Spleen (tissue), 13 donors: ENCODE measurements at regions of chr13 and their contacts with region 1.

Region 1: GRCh38 chr13:42478531-42479156 is 95.3 kb upstream of the TNFSF11 start:
- DNase-seq: no peak
- H3K4me3 ChIP-seq: no peak overlapping the region
- H3K27ac ChIP-seq: no peak overlapping the region
- H3K4me1 ChIP-seq: no peaks in the 10 kb centered on the region
- H3K27me3 ChIP-seq: no peaks in the 10 kb centered on the region
- CTCF ChIP-seq: peak in 2 of 11 experiments; percentile 18 to 31
- POLR2A ChIP-seq: no peak

Region 2: GRCh38 chr13:42333613-42334328 is 144.9 kb before region 1 on chr13:
- intact Hi-C with region 1: loop called (anchors 10 kb)
- DNase-seq: no peak
- H3K4me3 ChIP-seq: no peak overlapping the region
- H3K27ac ChIP-seq: no peak overlapping the region
- H3K4me1 ChIP-seq: peaks cover 0 to 13% (median 8%) of the 10 kb centered on the region in 6 donors
- H3K27me3 ChIP-seq: no peaks in the 10 kb centered on the region
- CTCF ChIP-seq: peak in 7 of 11 experiments; percentile 20 to 55 (median 31)
- POLR2A ChIP-seq: no peak

Region 3: GRCh38 chr13:42466123-42466522 is 12.5 kb before region 1 on chr13:
- intact Hi-C with region 1: loop called (anchors 2 kb)
- DNase-seq: no peak
- H3K4me3 ChIP-seq: no peak overlapping the region
- H3K27ac ChIP-seq: no peak overlapping the region
- H3K4me1 ChIP-seq: peaks cover 0 to 15% (median 0%) of the 10 kb centered on the region in 6 donors
- H3K27me3 ChIP-seq: no peaks in the 10 kb centered on the region
- CTCF ChIP-seq: no peak
- POLR2A ChIP-seq: no peak

Region 4: DNA sequence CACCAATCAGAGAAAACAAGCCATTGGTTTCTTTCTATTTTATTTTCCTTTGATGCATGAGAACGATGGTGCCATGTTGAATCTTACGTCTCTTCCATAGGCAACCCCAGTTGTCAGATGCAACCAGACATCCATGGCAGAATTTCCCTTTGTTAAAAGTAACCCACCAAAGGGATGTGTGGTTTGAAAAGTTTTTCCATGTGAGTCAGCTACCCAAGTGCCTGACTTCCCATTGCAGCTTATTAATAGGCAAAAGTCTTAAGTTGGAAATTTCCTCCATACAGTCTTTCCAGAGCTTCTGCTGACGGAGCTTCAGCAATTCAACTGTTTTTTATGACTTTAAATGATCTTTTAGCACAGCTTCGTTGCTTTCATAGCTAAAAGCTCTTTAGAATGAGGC is 228.9 kb after region 1 on chr13:
- intact Hi-C with region 1: no loop called
- DNase-seq: no peak
- H3K4me3 ChIP-seq: no peak overlapping the region
- H3K27ac ChIP-seq: no peak overlapping the region
- H3K4me1 ChIP-seq: no peaks in the 10 kb centered on the region
- H3K27me3 ChIP-seq: peaks cover 0 to 10% (median 0%) of the 10 kb centered on the region in 7 donors
- CTCF ChIP-seq: no peak
- POLR2A ChIP-seq: no peak